ENCODE measurements at regions of chr7 and their contacts with region 1.

Region 1: DNA sequence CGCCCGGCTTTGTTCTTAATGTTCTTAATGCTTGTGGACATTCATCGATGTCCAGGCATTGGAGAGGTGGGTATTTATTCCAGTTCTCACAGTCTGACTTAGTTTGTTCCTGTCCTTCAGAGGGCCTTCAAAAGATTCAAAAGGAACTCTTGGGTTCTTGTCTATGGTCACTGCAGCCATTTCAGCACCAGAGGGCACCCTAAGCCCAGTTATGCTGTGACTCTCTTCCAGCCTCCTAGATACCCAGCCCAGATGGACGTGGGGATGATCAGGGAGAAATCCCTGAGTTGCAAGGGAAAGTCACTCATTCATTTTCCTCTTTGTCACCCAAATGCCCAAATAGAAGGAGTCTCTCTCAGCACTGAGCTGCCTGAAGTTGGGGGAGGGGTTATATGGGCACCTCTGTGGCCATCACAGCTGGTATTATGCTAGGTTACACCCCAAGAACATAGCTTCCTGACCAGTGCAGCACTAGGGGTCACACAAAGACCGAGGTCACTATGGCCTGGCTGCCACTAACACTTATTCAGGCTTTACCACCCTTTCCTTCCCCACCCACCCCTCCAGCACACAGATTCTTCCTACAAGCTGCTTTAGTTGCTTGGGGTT is 26.5 kb upstream of the CCDC126 start:
- DNase-seq: peak; percentile 77
- H3K4me3 ChIP-seq: no peak overlapping the region
- H3K27ac ChIP-seq: no peak overlapping the region
- H3K4me1 ChIP-seq: no peaks in the 10 kb centered on the region
- H3K27me3 ChIP-seq: peaks cover 0 to 3% of the 10 kb centered on the region in 2 experiments
- CTCF ChIP-seq: peak; percentile 77 to 79
- POLR2A ChIP-seq: no peak

Region 2: GRCh38 chr7:23654508-23654907 is 83.8 kb after region 1 on chr7:
- CTCF ChIA-PET with region 1: interaction called, 3 read pairs
- POLR2A ChIA-PET with region 1: no interaction called
- dilution Hi-C with region 1: no loop called
- intact Hi-C with region 1: loop called (anchors 1 kb)
- DNase-seq: peak; percentile 35
- H3K4me3 ChIP-seq: no peak overlapping the region
- H3K27ac ChIP-seq: no peak overlapping the region
- H3K4me1 ChIP-seq: no peaks in the 10 kb centered on the region
- H3K27me3 ChIP-seq: no peaks in the 10 kb centered on the region
- CTCF ChIP-seq: peak; percentile 47 to 50
- POLR2A ChIP-seq: no peak

Region 3: DNA sequence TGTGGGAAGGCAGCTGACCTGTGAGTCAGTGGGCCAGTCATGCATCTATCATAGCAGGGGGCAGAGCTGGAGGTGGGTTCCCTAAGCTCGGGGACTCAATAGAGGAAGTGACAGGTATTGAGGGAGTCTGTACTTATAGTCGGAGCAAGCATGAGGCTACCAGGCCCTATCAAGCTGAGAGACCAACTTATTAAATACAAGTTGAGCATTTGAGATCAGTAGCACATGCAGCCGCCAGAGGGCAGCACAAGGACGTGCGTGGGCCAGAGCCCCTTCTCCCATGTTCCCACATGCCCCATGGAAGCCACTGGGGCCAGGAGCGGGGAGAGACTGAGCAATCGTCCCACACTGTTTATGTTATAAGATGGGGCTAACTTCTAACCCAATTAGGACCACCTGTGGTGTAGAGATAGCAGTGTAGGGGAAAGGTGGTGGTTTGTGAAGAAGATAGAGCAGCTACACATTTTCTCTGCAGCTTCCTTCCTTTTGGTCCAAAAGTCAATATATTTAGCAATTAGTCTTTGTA is 126.3 kb after region 1 on chr7:
- CTCF ChIA-PET with region 1: interaction called, 26 read pairs
- POLR2A ChIA-PET with region 1: no interaction called
- dilution Hi-C with region 1: no loop called
- intact Hi-C with region 1: loop called (anchors 1 kb)
- DNase-seq: peak; percentile 47
- H3K4me3 ChIP-seq: no peak overlapping the region
- H3K27ac ChIP-seq: no peak overlapping the region
- H3K4me1 ChIP-seq: no peaks in the 10 kb centered on the region
- H3K27me3 ChIP-seq: no peaks in the 10 kb centered on the region
- CTCF ChIP-seq: peak; percentile 74 to 77
- POLR2A ChIP-seq: no peak

Region 4: DNA sequence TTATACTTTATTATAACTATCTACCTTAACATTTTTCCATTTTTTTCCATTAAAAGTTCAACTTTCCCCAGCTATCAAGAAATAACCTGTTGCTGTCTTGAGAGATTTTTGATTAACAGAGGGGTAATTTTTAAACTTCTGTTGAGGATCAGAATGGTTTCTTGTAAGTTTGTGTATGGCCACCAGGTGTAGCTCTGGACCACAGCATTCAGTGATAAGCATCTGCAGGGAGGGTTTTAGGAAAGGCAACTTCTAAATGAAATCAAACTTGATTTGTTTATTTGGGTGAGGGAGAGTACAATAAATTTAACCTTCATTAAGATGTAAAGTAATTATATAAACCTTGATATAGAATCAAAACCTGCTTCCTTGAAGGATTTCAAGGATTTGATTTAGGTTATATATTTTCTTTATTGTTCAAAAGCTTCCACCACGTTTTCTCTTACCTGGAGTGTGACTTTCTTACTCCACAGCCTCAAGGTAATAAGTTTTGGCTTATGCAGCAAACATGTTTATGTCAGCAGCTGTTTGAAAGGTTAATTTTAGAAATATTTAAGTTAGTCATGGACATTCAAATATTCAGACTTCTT is 292.6 kb after region 1 on chr7:
- CTCF ChIA-PET with region 1: no interaction called
- POLR2A ChIA-PET with region 1: no interaction called
- dilution Hi-C with region 1: no loop called
- intact Hi-C with region 1: loop called (anchors 10 kb)
- DNase-seq: peak; percentile 15
- H3K4me3 ChIP-seq: no peak overlapping the region
- H3K27ac ChIP-seq: no peak overlapping the region
- H3K4me1 ChIP-seq: no peaks in the 10 kb centered on the region
- H3K27me3 ChIP-seq: no peaks in the 10 kb centered on the region
- CTCF ChIP-seq: peak; percentile 11 to 29
- POLR2A ChIP-seq: no peak

Region 5: DNA sequence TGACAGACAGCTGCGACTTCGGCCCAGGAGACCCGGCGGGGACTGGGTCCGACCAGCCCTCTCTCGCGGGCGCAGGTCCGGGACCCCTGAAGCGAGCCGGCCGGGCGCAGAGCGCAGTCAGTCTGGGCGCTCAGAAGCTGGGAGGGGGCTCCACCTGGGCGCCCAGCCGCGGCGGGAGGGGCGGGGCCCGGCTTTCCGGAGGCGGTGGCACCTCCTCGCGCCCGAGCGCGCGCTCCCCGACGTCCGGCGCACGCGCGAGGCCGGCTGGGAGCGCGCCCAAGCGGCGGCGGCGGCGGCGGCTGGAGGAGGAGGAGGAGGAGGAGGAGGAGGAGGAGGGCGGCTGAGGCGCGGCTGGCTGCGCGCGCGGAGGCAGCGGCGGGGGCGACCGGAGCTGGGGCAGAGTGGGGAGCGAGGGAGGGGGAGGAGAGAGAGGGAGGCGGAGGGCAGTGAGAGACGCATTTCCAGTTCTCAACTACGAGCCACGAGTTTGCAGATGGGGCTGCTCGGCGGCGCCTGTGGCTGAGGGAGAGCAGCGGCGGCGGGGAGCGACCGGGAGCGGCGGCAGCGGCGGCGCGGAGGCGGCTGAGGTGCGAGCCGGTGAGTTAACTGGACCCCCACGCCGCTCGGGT is 1002.4 kb after region 1 on chr7 and contains the start of gene PALS2:
- CTCF ChIA-PET with region 1: interaction called, 3 read pairs
- POLR2A ChIA-PET with region 1: no interaction called
- dilution Hi-C with region 1: no loop called
- intact Hi-C with region 1: loop called (anchors 10 kb)
- DNase-seq: peak; percentile 74
- H3K4me3 ChIP-seq: peak within 1 kb of the TSS; percentile 73 to 92 (median 82)
- H3K27ac ChIP-seq: peak within 1 kb of the TSS; percentile 61
- H3K4me1 ChIP-seq: peaks cover 17% of the 10 kb centered on the region
- H3K27me3 ChIP-seq: peaks cover 25 to 30% of the 10 kb centered on the region in 2 experiments
- CTCF ChIP-seq: no peak
- POLR2A ChIP-seq: no peak
- total RNA-seq, gene PALS2: 23.6 and 24.4 TPM in 2 replicates

Measured in endothelial cell of umbilical vein (primary cell).